ENCODE measurements at regions of chr20 and their contacts with region 1.

Region 1: DNA sequence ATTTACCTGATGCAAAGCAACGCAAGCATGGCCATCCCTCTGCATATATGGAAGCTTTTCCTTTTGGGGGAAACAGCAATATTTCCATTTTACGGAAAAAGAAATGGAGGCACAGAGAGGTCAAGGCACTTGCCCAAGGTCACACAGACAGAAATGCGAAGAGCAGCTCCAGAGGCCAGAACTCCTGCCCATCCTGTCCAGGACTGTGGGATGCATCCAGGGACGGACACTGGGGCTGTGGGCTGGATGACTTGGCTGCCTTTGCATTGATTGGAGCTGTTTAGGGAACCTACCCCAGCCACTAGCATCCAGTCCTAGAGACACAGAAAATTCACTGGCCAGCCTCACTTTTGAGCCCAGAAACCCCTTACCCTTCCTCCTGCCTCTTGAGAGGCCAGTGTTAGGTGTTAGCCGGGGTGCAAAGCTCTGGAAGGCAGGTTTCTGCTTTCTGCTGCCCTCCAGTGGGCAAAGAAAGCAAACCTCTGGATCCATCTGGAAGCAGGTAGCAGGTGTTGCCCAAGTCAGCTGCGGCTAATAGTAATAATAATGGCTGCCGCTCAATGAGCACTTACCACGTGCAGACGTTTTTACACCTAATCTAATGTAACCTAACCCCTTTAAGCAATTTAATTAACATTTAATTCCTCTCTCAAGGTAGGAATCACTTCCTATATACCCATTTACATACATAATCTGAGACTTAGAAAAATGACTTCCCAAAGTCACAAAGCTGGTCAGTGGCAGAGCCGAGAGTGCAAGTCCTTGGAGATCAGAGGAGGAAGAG is 31.7 kb upstream of the CCN5 start:
- DNase-seq: peak; percentile 82
- ATAC-seq: peak; percentile 89
- H3K4me3 Mint-ChIP-seq: no peak overlapping the region
- H3K27ac Mint-ChIP-seq: no peak overlapping the region
- H3K4me1 Mint-ChIP-seq: peaks cover 7% of the 10 kb centered on the region
- H3K27me3 Mint-ChIP-seq: peaks cover 7% of the 10 kb centered on the region

Region 2: GRCh38 chr20:44532259-44532980 is 151.0 kb before region 1 on chr20:
- CTCF ChIA-PET with region 1: no interaction called
- DNase-seq: no peak
- ATAC-seq: no peak
- H3K4me3 Mint-ChIP-seq: no peak overlapping the region
- H3K27ac Mint-ChIP-seq: no peak overlapping the region
- H3K4me1 Mint-ChIP-seq: peaks cover 7% of the 10 kb centered on the region
- H3K27me3 Mint-ChIP-seq: peaks cover 4% of the 10 kb centered on the region

Region 3: DNA sequence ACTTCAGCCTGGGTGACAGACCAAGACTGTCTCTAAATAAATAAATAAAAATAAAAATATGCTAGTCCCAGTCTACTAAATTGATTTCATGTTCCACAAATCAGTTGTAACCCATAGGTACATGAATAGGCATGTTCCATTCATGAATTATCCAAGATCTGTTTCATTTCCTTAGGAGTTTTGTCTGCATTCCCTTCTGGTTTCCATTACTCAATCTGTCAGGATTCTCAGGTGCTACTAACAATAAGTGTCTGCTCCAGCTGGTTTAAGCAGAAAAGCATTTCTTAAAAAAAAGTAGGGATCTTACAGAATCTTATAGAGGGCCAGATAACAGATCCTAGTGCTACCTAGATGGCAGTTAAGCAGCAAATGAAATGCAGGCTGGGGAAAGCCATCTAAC is 116.6 kb before region 1 on chr20:
- CTCF ChIA-PET with region 1: no interaction called
- DNase-seq: no peak
- ATAC-seq: no peak
- H3K4me3 Mint-ChIP-seq: no peak overlapping the region
- H3K27ac Mint-ChIP-seq: no peak overlapping the region
- H3K4me1 Mint-ChIP-seq: peaks cover 7% of the 10 kb centered on the region
- H3K27me3 Mint-ChIP-seq: peaks cover 11% of the 10 kb centered on the region

Region 4: GRCh38 chr20:44609511-44610312 is 73.7 kb before region 1 on chr20:
- CTCF ChIA-PET with region 1: interaction called, 23 read pairs
- DNase-seq: peak; percentile 86
- ATAC-seq: peak; percentile 98
- H3K4me3 Mint-ChIP-seq: no peak overlapping the region
- H3K27ac Mint-ChIP-seq: peak overlapping the region; percentile 70
- H3K4me1 Mint-ChIP-seq: peaks cover 10% of the 10 kb centered on the region
- H3K27me3 Mint-ChIP-seq: no peaks in the 10 kb centered on the region

Region 5: DNA sequence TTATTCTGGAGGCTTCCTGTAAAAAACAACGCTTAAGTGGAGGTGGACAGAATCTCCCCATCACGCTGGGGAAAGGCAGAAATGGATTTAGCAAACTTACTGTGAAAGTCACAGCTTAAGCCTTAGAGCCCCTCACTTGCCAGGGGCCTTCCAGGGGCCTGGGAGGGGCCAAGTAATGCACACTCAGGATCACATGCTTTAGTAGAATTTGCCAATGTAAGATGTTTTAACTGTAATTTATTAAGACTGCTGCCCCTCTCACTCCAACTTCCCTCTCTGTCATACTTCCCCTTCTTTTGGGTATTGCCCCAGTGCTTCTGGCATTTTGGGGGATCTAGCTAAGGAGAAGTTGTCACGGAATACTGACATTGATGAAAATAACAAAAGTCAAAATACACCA is 19.3 kb before region 1 on chr20:
- CTCF ChIA-PET with region 1: interaction called, 14 read pairs
- DNase-seq: no peak
- ATAC-seq: no peak
- H3K4me3 Mint-ChIP-seq: no peak overlapping the region
- H3K27ac Mint-ChIP-seq: no peak overlapping the region
- H3K4me1 Mint-ChIP-seq: peaks cover 9% of the 10 kb centered on the region
- H3K27me3 Mint-ChIP-seq: no peaks in the 10 kb centered on the region

Region 6: DNA sequence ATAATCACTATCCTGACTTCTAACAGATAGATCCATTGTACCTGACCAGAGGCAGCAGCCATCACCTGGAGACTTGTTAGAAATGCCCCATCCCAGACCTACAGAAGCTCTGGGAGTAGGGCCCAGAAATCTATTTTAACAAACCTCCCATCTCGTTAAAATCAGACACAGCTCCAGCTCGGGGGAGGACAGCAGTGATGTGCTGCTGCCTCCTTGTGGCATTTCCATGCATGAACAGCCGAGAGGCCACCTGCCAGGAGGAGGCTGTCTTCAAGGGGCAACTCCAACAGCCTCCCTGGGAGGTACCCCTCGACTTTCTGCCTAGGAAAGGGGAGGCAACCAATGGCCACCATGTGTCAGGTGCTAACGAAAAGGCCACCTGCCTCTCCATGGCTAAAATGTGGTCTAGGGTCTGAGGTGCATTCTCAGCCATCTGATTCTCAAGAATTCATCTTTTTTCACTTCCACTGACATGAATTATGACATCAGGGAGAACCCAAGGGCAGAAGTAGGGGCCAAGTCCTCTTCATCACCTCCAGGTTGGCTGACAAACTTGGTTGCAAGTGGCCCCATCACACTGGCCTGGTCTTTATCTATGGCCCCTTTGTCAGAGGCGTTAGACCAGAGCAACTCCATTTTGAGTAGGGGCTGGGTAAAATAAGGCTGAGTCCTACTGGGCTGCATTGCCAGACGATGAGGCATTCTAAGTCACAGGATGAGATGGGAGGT is 50.0 kb after region 1 on chr20:
- CTCF ChIA-PET with region 1: interaction called, 76 read pairs
- DNase-seq: peak; percentile 73
- ATAC-seq: peak; percentile 74
- H3K4me3 Mint-ChIP-seq: no peak overlapping the region
- H3K27ac Mint-ChIP-seq: no peak overlapping the region
- H3K4me1 Mint-ChIP-seq: peaks cover 28% of the 10 kb centered on the region
- H3K27me3 Mint-ChIP-seq: no peaks in the 10 kb centered on the region

Region 7: DNA sequence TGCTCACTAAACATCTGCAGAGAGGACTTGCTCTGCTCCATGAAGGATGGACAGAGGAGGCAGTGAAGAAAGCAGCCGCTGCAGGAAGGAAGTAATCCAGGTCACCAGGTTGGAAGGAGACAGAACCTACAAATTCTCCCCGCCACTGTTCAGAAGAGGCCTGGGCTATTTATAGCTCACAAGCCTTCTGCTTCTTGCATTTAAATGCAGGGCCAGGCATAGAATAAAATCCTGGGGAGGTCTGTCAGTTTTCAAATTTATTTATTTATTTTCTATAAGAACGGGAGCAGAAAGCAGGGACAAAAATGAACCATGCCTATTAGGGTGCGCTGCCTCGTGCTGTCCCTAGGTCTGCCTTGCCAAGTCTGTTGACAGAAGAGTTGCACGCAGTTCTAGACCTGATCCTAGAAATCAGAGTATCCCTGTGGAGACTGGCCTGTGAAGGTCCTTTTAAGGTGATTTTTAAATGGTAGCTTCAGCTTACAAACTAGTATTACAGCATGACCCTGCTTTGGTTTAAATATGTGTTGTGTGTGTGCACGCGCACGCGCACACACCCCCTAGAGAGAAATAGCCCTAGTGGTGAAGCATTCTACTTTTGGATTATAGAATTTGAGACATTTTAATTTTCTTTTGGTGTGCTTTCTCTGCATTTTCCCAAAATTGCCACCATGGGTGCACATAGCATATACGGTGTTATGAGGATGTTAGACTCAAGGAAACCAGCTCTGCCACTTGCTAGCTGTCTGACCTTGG is 107.4 kb after region 1 on chr20:
- CTCF ChIA-PET with region 1: no interaction called
- DNase-seq: no peak
- ATAC-seq: no peak
- H3K4me3 Mint-ChIP-seq: no peak overlapping the region
- H3K27ac Mint-ChIP-seq: no peak overlapping the region
- H3K4me1 Mint-ChIP-seq: no peaks in the 10 kb centered on the region
- H3K27me3 Mint-ChIP-seq: peaks cover 11% of the 10 kb centered on the region

Region 8: GRCh38 chr20:44805979-44806620 is 122.6 kb after region 1 on chr20:
- CTCF ChIA-PET with region 1: no interaction called
- DNase-seq: no peak
- ATAC-seq: no peak
- H3K4me3 Mint-ChIP-seq: no peak overlapping the region
- H3K27ac Mint-ChIP-seq: no peak overlapping the region
- H3K4me1 Mint-ChIP-seq: peaks cover 4% of the 10 kb centered on the region
- H3K27me3 Mint-ChIP-seq: peaks cover 59% of the 10 kb centered on the region

Region 9: DNA sequence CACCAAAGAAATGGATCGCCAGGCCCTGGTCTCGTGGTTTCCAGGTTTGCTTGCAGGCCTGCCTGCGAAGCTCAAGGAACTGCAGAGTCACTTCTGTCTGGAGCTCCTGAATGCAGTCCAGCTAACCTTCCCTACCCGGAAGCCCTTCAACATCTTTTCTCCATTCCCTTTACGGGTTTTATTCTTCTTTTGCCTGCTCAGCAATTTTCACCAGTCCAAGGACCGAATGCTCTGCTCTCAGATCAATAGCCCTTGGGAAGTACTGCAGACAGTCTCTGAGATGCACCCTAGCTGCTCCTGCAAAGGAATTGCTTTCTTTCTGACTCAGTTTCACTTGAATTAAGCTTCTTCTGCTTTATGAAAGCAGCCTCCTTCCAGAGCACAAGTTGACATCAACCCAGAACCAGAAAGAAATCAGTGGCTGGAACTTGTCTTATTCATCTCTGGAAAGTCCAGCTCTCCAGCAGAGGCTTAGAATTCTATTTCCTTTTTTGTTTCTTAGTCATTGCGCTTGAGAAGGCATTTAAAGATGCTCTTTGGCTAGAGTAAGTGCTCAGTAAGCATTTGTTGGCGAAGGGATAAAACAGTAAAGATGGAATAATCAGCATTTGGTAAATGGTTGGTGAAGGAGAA is 183.4 kb after region 1 on chr20:
- CTCF ChIA-PET with region 1: interaction called, 18 read pairs
- DNase-seq: no peak
- ATAC-seq: no peak
- H3K4me3 Mint-ChIP-seq: peak overlapping the region; percentile 50
- H3K27ac Mint-ChIP-seq: no peak overlapping the region
- H3K4me1 Mint-ChIP-seq: peaks cover 17% of the 10 kb centered on the region
- H3K27me3 Mint-ChIP-seq: peaks cover 25% of the 10 kb centered on the region